ENCODE measurements at regions of chr12 and their contacts with region 1.

Region 1: GRCh38 chr12:56521590-56522371 is at the start of gene RBMS2:
- DNase-seq: peak; percentile 94
- H3K4me3 ChIP-seq: peak within 1 kb of the TSS; percentile 61 to 98 (median 95)
- H3K27ac ChIP-seq: peak within 1 kb of the TSS; percentile 87
- H3K4me1 ChIP-seq: peaks cover 57% of the 10 kb centered on the region
- H3K27me3 ChIP-seq: no peaks in the 10 kb centered on the region
- CTCF ChIP-seq: no peak
- POLR2A ChIP-seq: no peak
- total RNA-seq, gene RBMS2: 95.4 and 103 TPM in 2 replicates

Region 2: GRCh38 chr12:56425193-56425592 is 96.6 kb before region 1 on chr12:
- CTCF ChIA-PET with region 1: no interaction called
- POLR2A ChIA-PET with region 1: no interaction called
- dilution Hi-C with region 1: no loop called
- intact Hi-C with region 1: no loop called
- DNase-seq: no peak
- H3K4me3 ChIP-seq: no peak overlapping the region
- H3K27ac ChIP-seq: no peak overlapping the region
- H3K4me1 ChIP-seq: no peaks in the 10 kb centered on the region
- H3K27me3 ChIP-seq: no peaks in the 10 kb centered on the region
- CTCF ChIP-seq: no peak
- POLR2A ChIP-seq: no peak

Region 3: DNA sequence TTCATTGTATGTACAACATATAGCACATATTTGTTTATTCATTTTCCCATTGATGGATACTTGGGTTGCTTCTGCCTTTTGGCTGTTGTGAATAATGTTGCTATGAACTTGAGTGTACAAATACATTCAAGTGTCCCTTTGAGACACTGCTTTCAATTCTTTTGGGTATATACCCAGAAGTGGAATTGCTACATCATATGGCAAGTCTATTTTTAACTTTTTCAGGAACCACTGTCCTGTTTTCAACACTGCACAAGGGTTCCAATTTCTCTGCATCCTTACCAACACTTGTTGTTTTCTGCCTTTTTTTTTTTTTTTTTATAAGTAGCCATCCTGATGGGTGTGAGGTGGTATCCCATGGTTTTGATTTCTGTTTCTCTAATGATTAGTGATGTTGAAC is 15.8 kb after region 1 on chr12:
- CTCF ChIA-PET with region 1: interaction called, 11 read pairs
- POLR2A ChIA-PET with region 1: interaction called, 3 read pairs
- dilution Hi-C with region 1: no loop called
- intact Hi-C with region 1: no loop called
- DNase-seq: no peak
- H3K4me3 ChIP-seq: no peak overlapping the region
- H3K27ac ChIP-seq: no peak overlapping the region
- H3K4me1 ChIP-seq: peaks cover 2% of the 10 kb centered on the region
- H3K27me3 ChIP-seq: no peaks in the 10 kb centered on the region
- CTCF ChIP-seq: no peak
- POLR2A ChIP-seq: no peak

Region 4: DNA sequence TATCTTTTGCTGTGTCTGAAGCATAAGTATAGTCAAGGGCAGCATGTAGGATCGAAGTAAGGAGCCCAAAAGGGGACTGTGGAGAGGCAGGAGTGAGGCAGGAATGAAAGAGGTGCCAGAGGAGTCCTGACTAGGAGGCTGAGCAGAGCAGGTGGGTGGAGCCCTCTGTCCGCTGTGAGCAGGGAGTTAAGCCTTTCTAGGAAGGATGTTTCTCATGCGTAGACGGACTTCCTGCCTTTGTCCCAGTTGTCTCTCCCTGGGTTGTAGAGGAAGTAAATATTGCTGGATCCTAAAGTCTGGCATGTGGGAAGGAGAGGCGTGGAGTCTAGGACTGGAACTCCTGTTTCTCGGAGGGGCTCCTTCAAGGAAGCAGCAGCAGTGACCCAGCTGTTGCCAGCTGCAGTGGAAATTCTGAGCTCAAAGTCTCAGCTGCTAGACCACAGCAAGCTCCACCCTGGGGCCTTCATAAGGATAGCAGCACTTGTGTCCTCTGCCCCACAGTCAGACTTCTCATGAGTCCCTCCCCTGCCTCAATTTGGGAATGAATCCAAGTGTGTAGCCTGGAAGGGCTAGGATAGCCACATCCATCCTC is 43.8 kb after region 1 on chr12:
- CTCF ChIA-PET with region 1: interaction called, 53 read pairs
- POLR2A ChIA-PET with region 1: interaction called, 5 read pairs
- dilution Hi-C with region 1: no loop called
- intact Hi-C with region 1: loop called (anchors 1 kb)
- DNase-seq: peak; percentile 98
- H3K4me3 ChIP-seq: peak overlapping the region in 1 of 3 experiments; percentile 7
- H3K27ac ChIP-seq: peak overlapping the region; percentile 87
- H3K4me1 ChIP-seq: peaks cover 19% of the 10 kb centered on the region
- H3K27me3 ChIP-seq: no peaks in the 10 kb centered on the region
- CTCF ChIP-seq: no peak
- POLR2A ChIP-seq: peak; percentile 81

Region 5: GRCh38 chr12:56571126-56571525 is 49.3 kb after region 1 on chr12:
- CTCF ChIA-PET with region 1: interaction called, 124 read pairs
- POLR2A ChIA-PET with region 1: interaction called, 5 read pairs
- dilution Hi-C with region 1: no loop called
- intact Hi-C with region 1: loop called (anchors 1 kb)
- DNase-seq: no peak
- H3K4me3 ChIP-seq: no peak overlapping the region
- H3K27ac ChIP-seq: no peak overlapping the region
- H3K4me1 ChIP-seq: peaks cover 12% of the 10 kb centered on the region
- H3K27me3 ChIP-seq: no peaks in the 10 kb centered on the region
- CTCF ChIP-seq: no peak
- POLR2A ChIP-seq: no peak